Activated T-helper 1 cell treated with anti-CD3 and anti-CD28 coated beads, Interleukin-12 subunit alpha, Interleukin-12 subunit beta, Interleukin-2, Interleukin-4 antibody, amounts not matched to agents 30 ng/mL and 10 ng/mL and 1 ng/mL, durations not matched to agents 14 hours and 24 hours and 36 hours (primary cell): ENCODE measurements at regions of chr12 and their contacts with region 1.

Region 1: DNA sequence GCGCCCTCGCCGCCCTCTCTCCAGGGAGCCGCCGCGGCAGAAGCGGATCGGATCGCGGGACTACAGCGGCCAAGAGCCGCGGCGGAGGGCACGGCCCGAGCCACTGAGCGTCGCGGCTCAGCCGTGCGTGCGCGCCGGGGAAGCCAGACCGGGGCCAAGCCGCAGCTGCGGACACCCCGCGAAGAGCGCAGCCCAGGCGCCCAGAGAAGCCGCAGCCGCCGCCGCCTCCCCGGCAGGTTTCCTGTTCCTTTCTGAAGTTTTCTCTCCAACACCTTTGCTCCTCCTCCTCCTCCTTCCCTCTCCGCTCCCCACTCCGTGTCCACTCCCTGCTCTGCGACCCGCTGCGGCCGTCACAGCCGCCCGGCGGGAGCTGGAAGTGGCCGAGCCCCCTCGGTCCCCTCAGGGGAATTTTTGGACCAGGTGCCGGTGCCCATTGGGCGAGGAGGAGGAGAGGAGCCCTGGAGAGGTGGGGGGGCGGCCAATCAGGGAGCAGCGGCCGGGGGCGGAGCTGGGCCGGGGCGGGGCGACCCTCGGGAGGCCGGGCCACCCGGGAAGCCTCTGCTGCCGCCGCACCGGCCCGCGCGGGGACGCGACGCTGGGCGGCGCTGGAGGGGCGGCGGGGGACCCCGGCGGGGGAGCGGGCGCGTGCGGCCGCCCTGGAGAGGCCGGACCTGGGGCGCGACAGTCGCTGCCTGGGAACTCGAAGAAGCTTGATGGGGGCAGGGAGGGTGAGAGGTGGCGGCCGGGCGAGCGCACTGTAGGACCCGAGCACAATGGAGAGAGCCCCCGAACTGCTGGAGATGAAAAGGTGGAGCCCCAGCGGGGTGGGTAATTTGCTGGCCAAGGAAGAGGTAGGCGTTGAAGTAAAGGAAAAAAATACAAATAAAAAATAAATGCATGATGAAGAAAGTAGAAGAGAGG is at the start of gene ITPR2:
- DNase-seq: peak; percentile 89
- H3K4me3 Mint-ChIP-seq: peak within 1 kb of the TSS; percentile 99
- H3K27ac Mint-ChIP-seq: peak within 1 kb of the TSS; percentile 98
- H3K4me1 Mint-ChIP-seq: peaks cover 42% of the 10 kb centered on the region
- H3K27me3 Mint-ChIP-seq: peaks cover 5% of the 10 kb centered on the region
- total RNA-seq, gene ITPR2: 33.0 and 34.2 TPM in 2 replicates

Region 2: GRCh38 chr12:26434299-26435068 is 398.6 kb before region 1 on chr12:
- intact Hi-C with region 1: loop called (anchors 10 kb)
- DNase-seq: no peak
- H3K4me3 Mint-ChIP-seq: no peak overlapping the region
- H3K27ac Mint-ChIP-seq: no peak overlapping the region
- H3K4me1 Mint-ChIP-seq: no peaks in the 10 kb centered on the region
- H3K27me3 Mint-ChIP-seq: no peaks in the 10 kb centered on the region

Region 3: GRCh38 chr12:26471560-26471959 is 361.5 kb before region 1 on chr12:
- intact Hi-C with region 1: no loop called
- DNase-seq: no peak
- H3K4me3 Mint-ChIP-seq: no peak overlapping the region
- H3K27ac Mint-ChIP-seq: peak overlapping the region; percentile 64
- H3K4me1 Mint-ChIP-seq: peaks cover 36% of the 10 kb centered on the region
- H3K27me3 Mint-ChIP-seq: no peaks in the 10 kb centered on the region

Region 4: DNA sequence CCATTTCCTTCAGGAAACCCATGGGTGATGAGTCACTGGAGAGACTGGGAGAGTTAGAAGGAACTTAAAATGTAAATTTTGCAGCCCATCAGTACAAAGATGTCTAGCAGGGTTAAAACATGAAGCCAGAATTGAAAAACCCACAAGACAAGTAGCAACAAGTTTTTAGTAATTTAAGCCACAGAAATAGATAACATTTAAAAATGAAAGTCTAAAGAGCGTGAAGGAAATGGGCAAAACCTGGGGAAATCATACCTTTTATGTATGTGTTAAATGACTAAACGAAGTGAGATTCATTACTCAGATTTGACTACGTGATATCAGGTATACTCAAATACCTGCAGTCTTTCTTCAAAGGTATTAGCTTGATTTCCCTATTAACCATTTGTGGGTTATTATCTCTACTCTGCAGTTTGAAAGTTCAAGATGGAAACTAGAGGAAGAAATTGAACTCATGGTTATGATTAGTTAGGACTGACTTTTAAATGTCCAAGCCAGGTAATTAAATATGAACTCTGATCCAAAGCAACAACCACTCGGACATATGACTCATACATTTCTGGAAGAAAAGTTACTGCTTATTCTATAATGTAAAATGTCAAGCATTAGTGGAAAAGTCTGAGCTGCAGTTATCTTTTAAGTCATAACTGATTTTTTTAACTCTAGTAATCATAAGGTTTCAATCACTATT is 84.2 kb before region 1 on chr12:
- intact Hi-C with region 1: loop called (anchors 1 kb)
- DNase-seq: no peak
- H3K4me3 Mint-ChIP-seq: peak overlapping the region; percentile 40
- H3K27ac Mint-ChIP-seq: peak overlapping the region; percentile 70
- H3K4me1 Mint-ChIP-seq: peaks cover 53% of the 10 kb centered on the region
- H3K27me3 Mint-ChIP-seq: no peaks in the 10 kb centered on the region

Region 5: GRCh38 chr12:26884765-26885576 is 51.9 kb after region 1 on chr12:
- intact Hi-C with region 1: loop called (anchors 1 kb)
- DNase-seq: peak; percentile 78
- H3K4me3 Mint-ChIP-seq: peak overlapping the region; percentile 23
- H3K27ac Mint-ChIP-seq: no peak overlapping the region
- H3K4me1 Mint-ChIP-seq: peaks cover 8% of the 10 kb centered on the region
- H3K27me3 Mint-ChIP-seq: peaks cover 16% of the 10 kb centered on the region

Region 6: GRCh38 chr12:27243804-27244683 is 411.0 kb after region 1 on chr12 and contains the start of gene STK38L:
- intact Hi-C with region 1: loop called (anchors 10 kb)
- DNase-seq: peak; percentile 96
- H3K4me3 Mint-ChIP-seq: peak within 1 kb of the TSS; percentile 100
- H3K27ac Mint-ChIP-seq: peak within 1 kb of the TSS; percentile 99
- H3K4me1 Mint-ChIP-seq: peaks cover 60% of the 10 kb centered on the region
- H3K27me3 Mint-ChIP-seq: no peaks in the 10 kb centered on the region
- total RNA-seq, gene STK38L: 20.5 and 23.3 TPM in 2 replicates

Region 7: DNA sequence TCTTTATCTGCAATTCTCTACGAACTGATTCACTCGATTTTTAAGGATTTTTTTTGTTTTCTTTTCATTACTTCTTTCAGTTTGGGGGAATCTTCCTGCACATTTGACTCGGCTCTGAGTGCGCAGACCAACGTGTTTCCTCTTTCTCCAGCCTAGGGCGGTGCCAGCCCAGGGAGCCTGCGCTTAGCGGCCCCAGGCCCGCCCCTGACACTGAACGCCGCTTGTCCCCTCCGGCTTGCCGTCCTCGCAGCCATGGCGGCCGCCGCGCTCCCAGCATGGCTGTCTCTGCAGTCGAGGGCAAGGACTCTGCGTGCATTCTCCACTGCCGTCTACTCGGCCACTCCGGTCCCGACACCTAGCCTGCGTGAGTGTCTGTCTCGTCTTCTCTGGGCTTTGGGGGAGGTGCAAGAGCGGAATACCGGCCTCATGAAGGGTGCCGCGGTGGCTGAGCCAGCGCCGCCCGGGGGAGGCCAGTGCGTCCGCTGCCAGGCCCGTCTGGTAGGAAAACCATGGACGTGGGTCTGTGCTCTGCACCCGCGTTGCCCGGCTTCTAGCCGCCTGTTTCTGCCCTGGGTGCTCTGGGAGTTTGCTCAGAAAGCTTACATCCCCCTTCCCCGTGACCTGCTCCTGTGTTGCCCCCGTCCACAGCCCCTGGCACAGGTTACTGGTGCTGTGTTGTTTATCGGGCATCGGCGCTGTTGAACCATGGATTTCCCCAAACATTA is 877.7 kb after region 1 on chr12 and contains the start of gene MRPS35:
- intact Hi-C with region 1: loop called (anchors 5 kb)
- DNase-seq: peak; percentile 89
- H3K4me3 Mint-ChIP-seq: peak within 1 kb of the TSS; percentile 97
- H3K27ac Mint-ChIP-seq: peak within 1 kb of the TSS; percentile 96
- H3K4me1 Mint-ChIP-seq: peaks cover 26% of the 10 kb centered on the region
- H3K27me3 Mint-ChIP-seq: peaks cover 10% of the 10 kb centered on the region
- total RNA-seq, gene MRPS35: 59.8 and 72.2 TPM in 2 replicates